ENCODE measurements at regions of chr19 and their contacts with region 1.

Region 1: GRCh38 chr19:42038666-42039065 is 31.3 kb downstream of the GRIK5 start:
- DNase-seq: no peak

Region 2: DNA sequence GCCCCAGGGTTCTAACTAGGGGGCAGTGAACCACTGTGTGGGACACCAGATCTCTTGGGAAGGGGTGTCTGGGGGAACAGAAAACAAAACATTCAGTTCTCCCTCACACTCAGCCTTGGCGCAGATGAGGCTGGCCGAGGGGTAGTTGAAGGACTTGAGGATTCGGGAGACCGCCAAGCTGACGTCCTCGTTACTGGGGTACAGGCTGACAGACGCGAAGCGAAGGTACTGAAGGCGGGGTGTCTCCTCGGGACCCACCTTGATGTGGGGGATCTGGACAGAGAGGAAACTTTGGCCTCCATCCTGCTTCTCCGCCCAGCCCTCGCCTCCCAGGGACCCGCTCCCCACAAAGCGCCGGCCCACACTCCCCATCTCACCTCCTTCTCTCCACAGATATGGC is 23.7 kb after region 1 on chr19:
- CTCF ChIA-PET with region 1: no interaction called
- POLR2A ChIA-PET with region 1: no interaction called
- DNase-seq: no peak

Region 3: GRCh38 chr19:42075616-42076379 is 37.1 kb after region 1 on chr19 and contains the start of gene ZNF574:
- CTCF ChIA-PET with region 1: interaction called, 7 read pairs
- POLR2A ChIA-PET with region 1: interaction called, 11 read pairs
- DNase-seq: peak; percentile 96